Psoas muscle (tissue), 8 donors: ENCODE measurements at regions of chr10 and their contacts with region 1.

Region 1: DNA sequence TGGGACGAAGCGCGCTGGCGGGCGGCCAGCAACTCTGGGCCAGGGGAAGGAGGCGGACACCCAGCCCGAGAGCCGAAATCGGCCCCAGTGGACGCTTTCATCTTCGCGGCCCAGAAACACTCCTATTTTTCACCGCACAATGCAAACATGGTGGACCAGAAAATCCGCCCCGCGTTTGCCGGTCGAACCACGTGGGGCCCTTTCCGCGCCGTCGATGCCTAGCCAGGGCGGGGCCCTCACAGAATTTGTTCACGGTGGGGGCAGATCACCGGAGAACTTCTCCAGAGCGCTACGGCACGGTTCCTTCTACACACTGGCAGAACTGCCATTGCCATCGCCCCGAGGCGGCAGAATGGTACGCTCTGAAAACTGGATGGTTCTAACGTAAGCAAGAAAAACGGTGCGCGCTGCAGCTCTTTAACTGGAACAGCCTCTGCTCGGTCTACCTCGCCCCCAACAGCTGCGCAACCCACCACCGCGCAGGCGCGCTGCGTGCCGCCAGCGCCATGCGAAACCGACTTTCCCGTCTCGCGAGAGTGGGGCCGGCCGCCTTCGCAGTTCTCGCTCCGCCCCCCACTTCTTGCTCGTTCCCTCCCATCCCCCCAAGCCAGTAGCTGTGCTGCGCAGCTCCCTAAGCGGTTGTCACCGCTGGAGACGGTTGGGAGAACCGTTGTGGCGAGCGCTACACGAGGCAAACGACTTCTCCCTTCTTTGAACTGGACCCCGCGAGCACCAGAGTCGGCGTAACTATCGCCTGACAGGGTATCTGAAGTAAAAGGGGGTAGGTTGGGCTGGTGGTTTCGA is at the start of gene HNRNPH3:
- DNase-seq: peak; percentile 98 to 99
- ATAC-seq: peak; percentile 90 to 94 (median 92)
- H3K4me3 ChIP-seq: peak within 1 kb of the TSS; percentile 93
- H3K27ac ChIP-seq: peak within 1 kb of the TSS; percentile 95
- H3K4me1 ChIP-seq: peaks cover 33% of the 10 kb centered on the region
- H3K27me3 ChIP-seq: no peaks in the 10 kb centered on the region
- CTCF ChIP-seq: no peak
- total RNA-seq, gene HNRNPH3: 73.1 to 102 (median 88.2) TPM

Region 2: DNA sequence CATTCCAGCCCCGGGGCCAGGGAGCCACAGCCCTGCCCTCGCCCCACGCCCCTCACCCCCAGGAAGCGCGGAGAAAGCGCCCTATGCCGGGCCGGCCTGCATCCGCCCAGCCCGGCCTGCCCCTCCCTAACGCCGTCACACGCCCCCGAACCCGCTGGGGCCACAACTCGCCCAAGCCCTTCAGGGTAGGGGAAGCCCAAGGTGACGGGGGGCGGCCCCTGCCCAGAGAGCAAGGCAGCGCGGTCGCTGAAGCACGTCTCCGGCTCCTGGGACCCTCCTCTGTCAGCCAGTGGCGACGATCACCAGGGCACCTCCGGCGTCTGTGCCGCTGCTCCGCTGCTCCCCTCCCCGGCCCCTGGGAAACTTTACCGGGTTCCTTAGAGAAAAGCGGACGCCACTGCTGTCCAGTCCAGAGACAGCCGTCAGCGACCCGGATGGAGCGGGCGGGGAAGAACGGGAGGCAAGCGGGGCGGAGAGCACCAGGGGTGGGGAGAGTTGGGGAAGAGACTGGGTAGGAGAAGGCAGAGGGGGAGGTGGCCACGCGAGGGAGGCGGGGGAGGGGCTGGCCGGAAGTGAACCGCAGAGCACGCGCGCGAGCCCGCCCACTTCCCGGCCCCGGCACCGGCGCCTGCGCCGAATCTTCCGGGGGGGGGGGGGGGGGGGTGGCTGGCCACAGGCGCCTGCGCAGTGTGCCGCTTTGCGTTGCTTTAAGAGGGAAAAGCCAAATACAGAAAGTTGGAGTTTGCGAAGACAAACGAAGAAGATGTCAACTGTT is 256.7 kb before region 1 on chr10 and contains the start of gene HERC4:
- intact Hi-C with region 1: loop called (anchors 10 kb)
- DNase-seq: peak; percentile 95 to 97
- ATAC-seq: peak; percentile 97 to 98 (median 98)
- H3K4me3 ChIP-seq: peak within 1 kb of the TSS; percentile 88
- H3K27ac ChIP-seq: peak within 1 kb of the TSS; percentile 99
- H3K4me1 ChIP-seq: peaks cover 34% of the 10 kb centered on the region
- H3K27me3 ChIP-seq: no peaks in the 10 kb centered on the region
- CTCF ChIP-seq: no peak
- total RNA-seq, gene HERC4: 15.1 to 29.4 (median 20.6) TPM

Region 3: DNA sequence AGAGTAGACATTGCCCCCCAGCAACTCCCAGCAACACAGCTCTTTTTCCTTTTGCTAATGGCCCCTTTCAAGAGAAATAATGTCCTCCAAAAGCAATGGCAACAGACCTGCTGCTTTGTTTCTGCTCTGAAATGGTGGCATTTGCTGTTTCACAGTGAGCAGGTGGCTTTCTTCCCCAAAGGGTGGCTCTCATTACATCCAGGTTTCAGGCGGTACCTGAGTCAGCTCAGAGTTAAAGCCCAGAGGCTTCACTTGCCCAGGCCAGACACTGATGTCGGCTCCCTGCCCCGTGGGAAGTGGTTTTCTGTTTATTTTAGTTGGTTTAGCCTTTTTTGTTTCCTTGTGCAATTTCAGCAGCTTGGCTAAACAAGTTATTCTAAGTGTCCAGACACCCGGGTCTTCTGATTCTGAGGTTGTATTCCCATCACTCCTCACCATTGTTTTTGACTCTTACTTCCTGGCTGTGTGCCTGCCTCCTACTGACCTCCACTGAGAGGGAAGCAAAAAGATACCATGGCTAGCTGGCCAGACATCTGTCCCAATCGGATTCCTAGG is 92.0 kb before region 1 on chr10:
- intact Hi-C with region 1: loop called in 1 of 2 experiments (anchors 5 kb)
- DNase-seq: no peak
- ATAC-seq: no peak
- H3K4me3 ChIP-seq: no peak overlapping the region
- H3K27ac ChIP-seq: no peak overlapping the region
- H3K4me1 ChIP-seq: no peaks in the 10 kb centered on the region
- H3K27me3 ChIP-seq: no peaks in the 10 kb centered on the region
- CTCF ChIP-seq: no peak